ENCODE measurements at regions of chr6 and their contacts with region 1.

Region 1: GRCh38 chr6:36196880-36197548 is 470 bp downstream of the BRPF3 start:
- DNase-seq: peak; percentile 100
- ATAC-seq: peak; percentile 98
- H3K4me3 ChIP-seq: peak overlapping the region; percentile 72
- H3K27ac ChIP-seq: peak overlapping the region; percentile 87
- H3K4me1 ChIP-seq: peaks cover 8 to 12% of the 10 kb centered on the region in 2 experiments; a peak in 3 of 5 replicates
- H3K27me3 ChIP-seq: no peaks in the 10 kb centered on the region
- CTCF ChIP-seq: no peak
- EP300 ChIP-seq: no peak
- POLR2A ChIP-seq: peak; percentile 83
- RAD21 ChIP-seq: no peak

Region 2: GRCh38 chr6:35453236-35453635 is 743.8 kb before region 1 on chr6:
- CTCF ChIA-PET with region 1: no interaction called
- POLR2A ChIA-PET with region 1: no interaction called
- in situ Hi-C with region 1: no loop called
- intact Hi-C with region 1: no loop called
- DNase-seq: peak in 1 of 4 experiments; percentile 42
- ATAC-seq: no peak
- H3K4me3 ChIP-seq: peak overlapping the region; percentile 73
- H3K27ac ChIP-seq: peak overlapping the region; percentile 78
- H3K4me1 ChIP-seq: peaks cover 18 to 27% of the 10 kb centered on the region in 2 experiments
- H3K27me3 ChIP-seq: 0 out of 5 replicates have a peak, but pooled peaks cover 0 to 3% of the 10 kb centered on the region in 2 experiments
- CTCF ChIP-seq: no peak
- EP300 ChIP-seq: no peak
- POLR2A ChIP-seq: no peak
- RAD21 ChIP-seq: no peak; a peak in 1 of 4 replicates

Region 3: GRCh38 chr6:36123257-36124139 is 73.5 kb before region 1 on chr6:
- CTCF ChIA-PET with region 1: interaction called, 7 read pairs
- POLR2A ChIA-PET with region 1: no interaction called
- in situ Hi-C with region 1: no loop called
- intact Hi-C with region 1: loop called (anchors 2 kb)
- DNase-seq: peak; percentile 92 to 95 (median 94)
- ATAC-seq: peak; percentile 87
- H3K4me3 ChIP-seq: no peak overlapping the region
- H3K27ac ChIP-seq: 0 out of 3 replicates have a peak overlapping the region, but pooled peaks have one; percentile 2
- H3K4me1 ChIP-seq: peaks cover 55 to 69% of the 10 kb centered on the region in 2 experiments
- H3K27me3 ChIP-seq: no peaks in the 10 kb centered on the region
- CTCF ChIP-seq: peak; percentile 79 to 92 (median 92)
- EP300 ChIP-seq: peak; percentile 40; the same call in 1 of the 2 replicates
- POLR2A ChIP-seq: no peak
- RAD21 ChIP-seq: peak; percentile 74 to 90

Region 4: GRCh38 chr6:36207155-36207554 is 10.1 kb after region 1 on chr6:
- CTCF ChIA-PET with region 1: no interaction called
- POLR2A ChIA-PET with region 1: interaction called, 23 read pairs
- in situ Hi-C with region 1: no loop called
- intact Hi-C with region 1: no loop called
- DNase-seq: no peak
- ATAC-seq: no peak
- H3K4me3 ChIP-seq: no peak overlapping the region
- H3K27ac ChIP-seq: no peak overlapping the region
- H3K4me1 ChIP-seq: no peaks in the 10 kb centered on the region; a peak in 1 of 5 replicates
- H3K27me3 ChIP-seq: no peaks in the 10 kb centered on the region
- CTCF ChIP-seq: no peak
- EP300 ChIP-seq: no peak
- POLR2A ChIP-seq: no peak
- RAD21 ChIP-seq: no peak